GM10248 (cell line): ENCODE measurements at regions of chr2 and their contacts with region 1.

Region 1: GRCh38 chr2:219530048-219530963 is 13.3 kb downstream of the CHPF start:
- DNase-seq: peak; percentile 91
- CTCF ChIP-seq: peak; percentile 88

Region 2: DNA sequence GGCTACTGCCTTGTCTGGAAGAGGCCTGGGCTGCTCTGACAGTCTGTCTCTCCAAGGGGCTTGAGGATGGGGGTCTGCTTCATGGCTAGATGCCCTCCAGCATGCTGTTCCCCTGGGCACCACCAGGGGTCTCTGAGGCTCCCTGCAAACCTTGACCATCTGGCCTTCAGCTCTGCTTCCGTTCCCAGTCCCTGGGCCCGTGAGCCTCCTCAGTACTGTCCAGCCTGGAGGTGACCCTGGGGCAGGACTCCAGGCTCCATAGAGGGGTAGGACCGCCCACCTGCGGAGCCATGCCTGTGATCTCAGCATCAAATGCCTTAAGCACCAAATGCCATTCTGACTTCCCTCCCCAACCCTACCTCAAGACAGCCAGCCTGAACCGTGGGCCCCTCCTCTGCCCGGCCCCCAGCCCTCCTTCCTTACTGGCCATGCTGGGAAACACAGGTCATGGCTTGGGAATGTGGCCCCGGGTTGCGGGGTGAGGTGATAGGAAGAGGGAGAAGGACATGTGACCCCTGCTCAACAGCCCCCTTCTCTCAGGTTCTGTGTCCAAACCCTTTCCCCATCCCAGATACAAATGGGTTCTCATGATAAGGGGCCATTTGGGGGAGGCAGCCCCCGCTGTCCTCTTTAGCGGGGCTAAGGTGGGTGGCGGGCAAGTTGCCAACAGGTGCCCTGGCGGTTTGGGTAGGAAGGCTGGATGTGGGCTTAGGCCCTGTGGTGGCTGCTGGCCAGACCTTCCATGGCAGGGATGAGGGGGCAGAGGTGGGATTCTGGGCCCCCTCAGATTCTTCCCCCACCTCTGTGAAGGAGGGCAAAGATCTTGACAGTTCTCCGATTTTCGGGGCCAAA is 70.6 kb before region 1 on chr2:
- CTCF ChIA-PET with region 1: interaction called, 115 read pairs
- POLR2A ChIA-PET with region 1: no interaction called
- DNase-seq: peak; percentile 86
- CTCF ChIP-seq: peak; percentile 83

Region 3: DNA sequence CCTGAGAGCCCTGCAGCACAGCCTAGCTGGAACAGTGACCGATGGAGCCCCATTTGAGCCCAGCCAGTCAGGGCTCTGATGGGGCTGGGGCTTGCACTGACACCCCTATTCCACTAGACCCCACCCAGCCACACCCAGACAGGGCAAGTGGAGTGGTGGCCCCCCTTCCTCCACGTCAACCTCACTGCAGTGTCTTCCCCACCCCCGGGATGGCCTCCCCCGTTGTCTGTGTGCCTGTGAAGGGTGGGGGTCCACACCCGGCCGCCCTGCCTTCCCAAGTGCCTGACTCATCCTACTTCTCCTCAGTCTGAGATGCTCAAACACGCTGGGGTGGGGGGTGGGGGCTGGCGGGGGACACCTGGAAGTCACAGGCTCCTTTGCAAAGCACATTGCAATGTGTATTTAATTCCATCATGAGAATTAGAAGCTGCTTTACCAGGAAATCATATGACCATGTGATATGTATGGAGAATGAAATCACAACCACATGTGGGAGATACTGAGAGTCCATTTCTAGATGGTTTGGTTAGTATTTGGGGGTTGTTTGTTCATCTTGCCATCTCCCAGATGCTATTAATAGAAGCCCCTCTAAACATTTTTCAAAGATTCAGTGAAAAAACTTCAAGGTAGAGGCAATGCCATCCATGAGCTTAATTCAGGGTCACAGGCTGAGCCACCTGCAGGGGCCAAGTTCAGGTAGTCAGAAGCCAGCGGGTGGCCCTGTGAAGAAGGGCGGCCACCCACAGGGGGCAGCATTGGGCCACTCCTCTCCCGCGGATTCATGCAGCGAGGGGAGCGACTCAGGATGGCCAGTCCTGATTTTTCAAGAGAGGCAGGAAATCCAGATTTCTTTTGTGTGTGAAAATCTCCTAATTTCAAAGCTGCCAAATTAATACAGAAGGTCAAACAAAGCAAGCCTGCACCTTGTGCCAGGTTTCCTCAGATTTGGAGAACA is 54.3 kb before region 1 on chr2:
- CTCF ChIA-PET with region 1: interaction called, 77 read pairs
- POLR2A ChIA-PET with region 1: no interaction called
- DNase-seq: peak; percentile 79
- CTCF ChIP-seq: peak; percentile 84

Region 4: DNA sequence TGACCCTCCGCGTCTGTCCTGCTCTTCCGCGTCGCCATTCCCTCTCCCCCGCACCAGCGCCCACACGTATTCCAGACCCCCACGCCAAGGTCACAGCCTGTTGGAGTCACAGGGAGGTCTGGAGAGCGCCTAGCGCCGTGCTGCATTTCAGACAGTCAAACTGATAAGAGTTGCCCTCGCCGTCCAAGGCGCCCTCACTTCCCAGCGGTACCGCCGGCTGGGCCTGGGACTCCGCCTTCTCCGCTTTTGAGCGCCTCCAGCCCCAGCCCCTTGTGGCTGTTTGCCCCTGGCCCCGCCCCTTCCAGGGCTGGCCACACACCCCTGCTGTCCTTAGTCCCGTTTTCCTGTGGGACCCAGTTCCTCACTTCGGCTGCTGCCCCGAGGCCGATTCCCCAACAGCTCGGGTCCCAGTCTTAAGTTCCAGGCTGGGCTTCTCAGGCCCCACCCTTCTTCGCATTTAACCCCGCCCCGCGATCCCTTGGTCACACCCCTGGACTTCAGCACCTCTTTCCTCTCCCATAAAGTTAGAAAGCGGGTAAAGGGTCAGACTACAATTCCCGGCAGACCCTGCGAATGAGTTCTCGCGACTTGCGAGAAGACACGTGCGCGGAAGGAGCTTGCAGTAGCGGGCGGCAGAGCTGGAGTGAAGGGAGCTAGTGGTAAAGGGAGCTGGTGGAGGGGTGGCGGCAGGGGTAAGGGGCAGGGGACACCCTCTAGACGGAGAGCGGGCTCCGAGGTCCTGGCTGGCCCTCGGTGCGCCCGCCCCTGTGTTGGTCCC is 31.8 kb before region 1 on chr2 and contains the start of gene GMPPA:
- CTCF ChIA-PET with region 1: interaction called, 325 read pairs
- POLR2A ChIA-PET with region 1: interaction called, 3 read pairs
- DNase-seq: peak; percentile 98
- CTCF ChIP-seq: no peak